Panc1 (cell line): ENCODE measurements at regions of chr15 and their contacts with region 1.

Region 1: GRCh38 chr15:72491768-72492167 is 17.6 kb downstream of the ARIH1 start:
- DNase-seq: peak; percentile 80
- ATAC-seq: peak; percentile 94
- H3K4me3 ChIP-seq: no peak overlapping the region
- H3K27ac ChIP-seq: no peak overlapping the region
- H3K4me1 ChIP-seq: peaks cover 17% of the 10 kb centered on the region
- H3K27me3 ChIP-seq: no peaks in the 10 kb centered on the region
- CTCF ChIP-seq: no peak

Region 2: GRCh38 chr15:72532991-72533601 is 41.3 kb after region 1 on chr15:
- CTCF ChIA-PET with region 1: no interaction called
- POLR2A ChIA-PET with region 1: no interaction called
- in situ Hi-C with region 1: loop called (anchors 10 kb)
- intact Hi-C with region 1: no loop called
- DNase-seq: no peak
- ATAC-seq: peak; percentile 73; the same call in 1 of the 2 replicates
- H3K4me3 ChIP-seq: no peak overlapping the region
- H3K27ac ChIP-seq: no peak overlapping the region
- H3K4me1 ChIP-seq: no peaks in the 10 kb centered on the region
- H3K27me3 ChIP-seq: no peaks in the 10 kb centered on the region
- CTCF ChIP-seq: peak; percentile 71

Region 3: DNA sequence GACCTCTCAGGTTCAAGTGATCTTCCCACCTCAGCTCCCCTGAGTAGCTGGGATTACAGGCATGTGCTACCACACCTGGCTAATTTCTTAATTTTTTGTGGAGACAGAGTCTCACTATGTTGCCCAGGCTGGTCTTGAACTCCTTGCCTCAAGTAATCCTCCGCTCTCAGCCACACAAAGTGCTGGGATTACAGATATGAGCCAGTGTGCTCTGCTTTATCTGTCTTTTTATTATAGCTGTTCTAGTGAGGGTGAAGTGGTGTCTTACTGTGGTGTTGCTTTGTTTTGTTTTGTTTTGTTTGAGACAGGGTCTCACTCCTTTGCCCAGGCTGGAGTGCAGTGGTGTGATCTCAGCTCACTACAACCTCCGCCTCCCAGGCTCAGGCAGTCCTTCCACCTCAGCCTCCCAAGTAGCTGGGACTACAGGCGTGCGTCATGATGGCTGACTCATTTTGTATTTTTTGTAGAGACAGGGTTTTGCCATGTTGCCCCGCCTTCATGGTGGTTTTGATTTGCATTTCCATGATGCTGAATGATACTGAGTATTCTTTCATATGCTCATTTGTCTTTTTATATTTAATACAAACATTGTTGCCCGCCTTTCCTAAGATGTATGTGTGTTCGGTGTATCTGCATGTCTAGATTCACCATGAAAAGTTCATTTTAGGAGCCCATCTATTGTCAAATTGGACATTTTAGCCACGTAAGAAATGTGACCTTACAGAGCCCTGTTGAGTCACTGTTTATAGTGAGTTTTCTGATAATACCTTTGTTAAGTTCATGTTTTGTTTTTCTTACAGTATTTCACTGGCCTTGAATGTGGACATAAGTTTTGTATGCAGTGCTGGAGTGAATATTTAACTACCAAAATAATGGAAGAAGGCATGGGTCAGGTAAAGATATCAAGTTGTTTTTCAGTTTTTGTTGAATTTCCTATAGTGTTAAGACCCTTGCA is 63.0 kb after region 1 on chr15:
- CTCF ChIA-PET with region 1: no interaction called
- POLR2A ChIA-PET with region 1: no interaction called
- in situ Hi-C with region 1: no loop called
- intact Hi-C with region 1: loop called (anchors 10 kb)
- DNase-seq: no peak
- ATAC-seq: no peak
- H3K4me3 ChIP-seq: no peak overlapping the region
- H3K27ac ChIP-seq: no peak overlapping the region
- H3K4me1 ChIP-seq: no peaks in the 10 kb centered on the region
- H3K27me3 ChIP-seq: no peaks in the 10 kb centered on the region
- CTCF ChIP-seq: no peak

Region 4: GRCh38 chr15:72865982-72866874 is 374.5 kb after region 1 on chr15:
- CTCF ChIA-PET with region 1: no interaction called
- POLR2A ChIA-PET with region 1: no interaction called
- in situ Hi-C with region 1: no loop called
- intact Hi-C with region 1: no loop called
- DNase-seq: no peak
- ATAC-seq: no peak
- H3K4me3 ChIP-seq: no peak overlapping the region
- H3K27ac ChIP-seq: no peak overlapping the region
- H3K4me1 ChIP-seq: no peaks in the 10 kb centered on the region
- H3K27me3 ChIP-seq: peaks cover 5% of the 10 kb centered on the region; the same call in 1 of the 2 replicates
- CTCF ChIP-seq: no peak

Region 5: DNA sequence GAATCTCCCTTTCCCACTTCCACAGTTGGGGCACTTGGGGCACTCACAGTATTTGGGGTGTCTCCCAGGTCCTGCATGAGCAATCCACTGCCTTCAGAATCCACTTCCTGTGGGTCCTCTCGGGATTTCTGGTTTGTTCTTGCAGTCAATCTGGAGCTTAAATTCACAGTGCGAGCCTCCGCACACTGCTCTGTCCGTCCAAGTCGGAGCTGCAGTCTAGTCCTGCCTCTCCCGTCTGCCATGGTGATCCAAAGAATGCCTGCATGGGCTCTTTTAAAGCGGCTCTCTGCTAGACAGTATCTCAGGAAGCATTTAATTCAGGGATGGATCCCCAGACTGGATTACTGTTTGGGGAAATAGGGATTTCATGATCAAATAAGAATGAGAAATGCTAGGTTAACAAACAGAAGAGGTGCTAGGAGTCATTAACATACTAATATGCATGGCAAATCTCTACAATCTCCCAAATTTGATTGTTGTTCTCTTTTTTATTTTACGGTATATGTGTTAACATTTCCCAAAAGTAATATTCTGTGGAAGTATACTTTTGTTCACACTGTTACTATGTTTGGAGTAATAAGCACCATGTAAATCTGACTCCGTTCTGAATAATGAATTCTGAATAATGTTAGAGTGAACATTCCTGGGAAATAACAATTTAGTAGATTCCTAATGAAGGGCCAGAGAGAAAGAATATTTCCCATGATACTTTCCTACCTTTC is 734.5 kb after region 1 on chr15:
- CTCF ChIA-PET with region 1: no interaction called
- POLR2A ChIA-PET with region 1: no interaction called
- in situ Hi-C with region 1: no loop called
- intact Hi-C with region 1: no loop called
- DNase-seq: no peak
- ATAC-seq: no peak
- H3K4me3 ChIP-seq: no peak overlapping the region
- H3K27ac ChIP-seq: no peak overlapping the region
- H3K4me1 ChIP-seq: no peaks in the 10 kb centered on the region
- H3K27me3 ChIP-seq: peaks cover 3% of the 10 kb centered on the region; the same call in 1 of the 2 replicates
- CTCF ChIP-seq: no peak